ENCODE measurements at regions of chr6 and their contacts with region 1.

Region 1: GRCh38 chr6:137866914-137867684 is at the start of gene TNFAIP3:
- DNase-seq: peak; percentile 88 to 99 (median 93)
- ATAC-seq: peak; percentile 69
- H3K4me3 ChIP-seq: peak within 1 kb of the TSS; percentile 90
- H3K4me3 Mint-ChIP-seq: peak within 1 kb of the TSS; percentile 96
- H3K27ac ChIP-seq: peak within 1 kb of the TSS; percentile 96 to 98
- H3K27ac Mint-ChIP-seq: peak within 1 kb of the TSS; percentile 95
- H3K4me1 ChIP-seq: peaks cover 30% of the 10 kb centered on the region
- H3K4me1 Mint-ChIP-seq: peaks cover 64% of the 10 kb centered on the region
- H3K27me3 ChIP-seq: no peaks in the 10 kb centered on the region
- H3K27me3 Mint-ChIP-seq: peaks cover 4% of the 10 kb centered on the region
- CTCF ChIP-seq: peak; percentile 45
- total RNA-seq, gene TNFAIP3: 3,816 to 3,885 TPM

Region 2: GRCh38 chr6:137697267-137697938 is 169.7 kb before region 1 on chr6:
- CTCF ChIA-PET with region 1: interaction called, 4 read pairs
- POLR2A ChIA-PET with region 1: interaction called, 15 read pairs
- intact Hi-C with region 1: no loop called
- DNase-seq: no peak
- ATAC-seq: no peak
- H3K4me3 ChIP-seq: no peak overlapping the region
- H3K4me3 Mint-ChIP-seq: no peak overlapping the region
- H3K27ac ChIP-seq: no peak overlapping the region
- H3K27ac Mint-ChIP-seq: no peak overlapping the region
- H3K4me1 ChIP-seq: peaks cover 16% of the 10 kb centered on the region
- H3K4me1 Mint-ChIP-seq: peaks cover 19% of the 10 kb centered on the region
- H3K27me3 ChIP-seq: no peaks in the 10 kb centered on the region
- H3K27me3 Mint-ChIP-seq: peaks cover 5% of the 10 kb centered on the region
- CTCF ChIP-seq: no peak

Region 3: DNA sequence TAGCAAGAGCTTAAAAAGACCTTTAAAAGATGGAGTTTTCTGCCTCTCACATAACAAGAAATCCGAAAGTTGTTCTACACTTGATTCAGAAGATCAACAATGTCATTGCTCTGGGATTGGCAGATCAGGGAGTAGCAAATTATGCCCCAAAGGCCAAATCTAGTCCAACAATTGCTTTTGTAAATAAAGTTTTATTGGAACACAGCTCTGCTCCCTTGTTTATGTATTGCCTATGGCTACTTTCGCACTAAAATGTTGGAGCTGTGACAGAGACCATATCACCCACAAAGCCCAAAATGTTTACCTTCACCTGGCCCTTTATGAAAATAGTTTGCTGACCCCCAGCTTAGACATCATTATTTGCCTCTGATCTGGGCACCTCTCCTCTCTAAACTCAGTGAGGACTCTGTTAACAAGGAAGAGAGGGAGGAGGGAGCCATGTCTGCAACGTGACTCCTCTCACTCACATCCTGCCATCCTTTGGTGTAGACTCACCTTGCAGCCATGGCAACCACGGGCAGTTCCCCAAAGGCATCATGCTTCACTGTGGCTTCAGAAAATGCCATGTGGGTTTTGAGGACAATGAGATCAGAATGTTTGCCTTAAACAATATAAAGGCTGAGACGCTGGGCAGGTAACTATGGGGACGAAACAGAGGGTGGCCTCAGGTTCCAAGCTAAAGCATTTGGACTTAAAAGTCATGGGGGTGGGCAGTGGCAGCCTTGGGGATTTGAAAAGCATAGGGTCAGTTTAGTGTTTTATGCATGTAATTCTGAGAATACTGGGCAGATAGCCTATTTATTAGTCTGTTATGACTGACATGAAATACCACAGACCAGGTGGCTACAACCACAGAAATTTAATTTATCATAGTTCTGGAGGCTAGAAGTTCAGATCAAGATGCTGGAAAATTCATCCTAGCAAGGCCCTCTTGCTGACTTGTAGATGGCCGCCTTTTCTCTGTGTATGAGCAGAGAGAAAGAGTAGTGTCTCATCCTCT is 149.7 kb before region 1 on chr6:
- CTCF ChIA-PET with region 1: interaction called, 54 read pairs
- POLR2A ChIA-PET with region 1: interaction called, 52 read pairs
- intact Hi-C with region 1: loop called in 1 of 2 experiments (anchors 1 kb)
- DNase-seq: peak; percentile 48 to 96 (median 70)
- ATAC-seq: peak; percentile 52
- H3K4me3 ChIP-seq: no peak overlapping the region
- H3K4me3 Mint-ChIP-seq: peak overlapping the region; percentile 71
- H3K27ac ChIP-seq: peak overlapping the region; percentile 59 to 72
- H3K27ac Mint-ChIP-seq: peak overlapping the region; percentile 91
- H3K4me1 ChIP-seq: peaks cover 23% of the 10 kb centered on the region
- H3K4me1 Mint-ChIP-seq: peaks cover 46% of the 10 kb centered on the region
- H3K27me3 ChIP-seq: no peaks in the 10 kb centered on the region
- H3K27me3 Mint-ChIP-seq: no peaks in the 10 kb centered on the region
- CTCF ChIP-seq: no peak

Region 4: DNA sequence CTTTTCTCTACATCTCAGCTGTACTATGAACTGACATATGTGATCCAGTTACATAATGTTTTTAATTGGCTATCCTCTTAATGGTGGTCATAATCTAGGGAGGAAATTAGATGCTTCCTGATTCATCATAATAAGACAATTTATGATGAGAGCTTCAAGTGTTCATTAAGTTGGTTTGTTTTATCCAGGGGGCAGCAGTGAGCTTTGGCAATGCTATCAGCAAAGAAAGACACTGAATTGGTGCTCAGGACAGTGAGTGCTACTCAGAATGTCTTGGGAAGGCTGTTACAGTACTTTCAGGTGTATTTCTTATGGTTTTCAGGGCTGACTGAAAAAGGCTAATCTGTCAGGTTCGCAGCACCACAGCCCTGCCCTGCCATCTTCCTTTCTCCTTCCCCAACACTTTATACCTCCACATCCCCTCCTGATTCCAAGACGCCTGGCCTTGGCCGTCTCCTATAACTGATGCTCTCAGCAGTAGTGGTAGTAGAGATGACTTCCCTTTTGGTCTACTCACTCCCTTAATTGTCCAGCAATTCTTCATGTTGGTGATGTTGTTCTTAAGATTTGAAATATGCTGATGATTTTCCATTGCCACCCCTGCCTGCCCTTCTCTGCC is 67.0 kb before region 1 on chr6:
- CTCF ChIA-PET with region 1: interaction called, 52 read pairs
- POLR2A ChIA-PET with region 1: interaction called, 141 read pairs
- intact Hi-C with region 1: loop called (anchors 1 kb)
- DNase-seq: peak in 13 of 14 experiments; percentile 22 to 92 (median 57)
- ATAC-seq: peak; percentile 82
- H3K4me3 ChIP-seq: no peak overlapping the region
- H3K4me3 Mint-ChIP-seq: peak overlapping the region; percentile 14
- H3K27ac ChIP-seq: no peak overlapping the region
- H3K27ac Mint-ChIP-seq: peak overlapping the region; percentile 78
- H3K4me1 ChIP-seq: peaks cover 24% of the 10 kb centered on the region
- H3K4me1 Mint-ChIP-seq: peaks cover 76% of the 10 kb centered on the region
- H3K27me3 ChIP-seq: no peaks in the 10 kb centered on the region
- H3K27me3 Mint-ChIP-seq: no peaks in the 10 kb centered on the region
- CTCF ChIP-seq: peak; percentile 79

Region 5: DNA sequence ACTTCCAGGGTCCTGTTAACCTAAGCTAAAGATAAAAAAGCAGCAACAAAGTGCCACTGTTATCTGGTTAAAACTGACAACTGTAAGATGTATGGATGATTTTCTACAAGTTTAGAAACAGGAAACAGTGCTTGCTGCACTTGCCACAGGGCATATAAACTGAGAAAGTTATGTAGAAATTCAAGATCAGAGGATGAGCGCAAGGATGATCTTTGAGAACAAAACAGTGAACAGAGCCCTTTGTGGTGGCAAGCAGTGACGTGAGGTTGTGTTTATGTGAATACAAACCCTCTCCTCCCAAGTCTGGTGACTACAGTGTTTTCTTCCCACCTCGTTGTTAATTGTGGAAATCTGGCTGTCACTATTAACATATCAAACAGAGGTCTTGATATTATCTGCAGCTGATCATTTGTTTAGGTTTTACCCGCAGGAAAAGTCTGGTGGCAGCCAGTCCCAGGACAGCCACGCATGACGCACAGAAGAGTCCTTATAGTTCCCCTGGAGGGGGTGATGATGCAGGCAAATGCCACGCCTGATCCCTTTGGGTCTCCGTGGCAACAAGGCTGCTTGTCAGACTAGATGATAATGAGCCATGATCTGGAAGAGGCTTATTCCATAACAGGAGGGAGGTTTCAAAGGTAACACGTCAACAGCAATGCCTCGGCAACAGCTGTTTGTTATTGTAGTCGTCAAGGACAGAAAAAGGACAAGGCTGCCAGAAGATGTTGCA is 43.1 kb before region 1 on chr6:
- CTCF ChIA-PET with region 1: interaction called, 48 read pairs
- POLR2A ChIA-PET with region 1: interaction called, 131 read pairs
- intact Hi-C with region 1: loop called (anchors 1 to 2 kb)
- DNase-seq: peak; percentile 43 to 98 (median 76)
- ATAC-seq: peak; percentile 71
- H3K4me3 ChIP-seq: peak overlapping the region; percentile 21
- H3K4me3 Mint-ChIP-seq: peak overlapping the region; percentile 69
- H3K27ac ChIP-seq: peak overlapping the region; percentile 93 to 94
- H3K27ac Mint-ChIP-seq: peak overlapping the region; percentile 96
- H3K4me1 ChIP-seq: peaks cover 53% of the 10 kb centered on the region
- H3K4me1 Mint-ChIP-seq: peaks cover 70% of the 10 kb centered on the region
- H3K27me3 ChIP-seq: no peaks in the 10 kb centered on the region
- H3K27me3 Mint-ChIP-seq: no peaks in the 10 kb centered on the region
- CTCF ChIP-seq: no peak

Region 6: GRCh38 chr6:137927777-137928218 is 60.7 kb after region 1 on chr6:
- CTCF ChIA-PET with region 1: no interaction called
- POLR2A ChIA-PET with region 1: interaction called, 18 read pairs
- intact Hi-C with region 1: no loop called
- DNase-seq: peak; percentile 32 to 93 (median 53)
- ATAC-seq: peak; percentile 99
- H3K4me3 ChIP-seq: no peak overlapping the region
- H3K4me3 Mint-ChIP-seq: peak overlapping the region; percentile 9
- H3K27ac ChIP-seq: peak overlapping the region in 1 of 2 donors; percentile 18
- H3K27ac Mint-ChIP-seq: peak overlapping the region; percentile 70
- H3K4me1 ChIP-seq: peaks cover 26% of the 10 kb centered on the region
- H3K4me1 Mint-ChIP-seq: peaks cover 45% of the 10 kb centered on the region
- H3K27me3 ChIP-seq: no peaks in the 10 kb centered on the region
- H3K27me3 Mint-ChIP-seq: no peaks in the 10 kb centered on the region
- CTCF ChIP-seq: no peak

Region 7: GRCh38 chr6:137975188-137975940 is 108.3 kb after region 1 on chr6:
- CTCF ChIA-PET with region 1: interaction called, 11 read pairs
- POLR2A ChIA-PET with region 1: interaction called, 34 read pairs
- intact Hi-C with region 1: no loop called
- DNase-seq: peak in 5 of 14 experiments; percentile 17 to 85 (median 72)
- ATAC-seq: peak; percentile 81
- H3K4me3 ChIP-seq: peak overlapping the region; percentile 19
- H3K4me3 Mint-ChIP-seq: peak overlapping the region; percentile 82
- H3K27ac ChIP-seq: peak overlapping the region; percentile 64 to 72
- H3K27ac Mint-ChIP-seq: peak overlapping the region; percentile 84
- H3K4me1 ChIP-seq: peaks cover 37% of the 10 kb centered on the region
- H3K4me1 Mint-ChIP-seq: peaks cover 29% of the 10 kb centered on the region
- H3K27me3 ChIP-seq: no peaks in the 10 kb centered on the region
- H3K27me3 Mint-ChIP-seq: no peaks in the 10 kb centered on the region
- CTCF ChIP-seq: peak; percentile 60

Region 8: DNA sequence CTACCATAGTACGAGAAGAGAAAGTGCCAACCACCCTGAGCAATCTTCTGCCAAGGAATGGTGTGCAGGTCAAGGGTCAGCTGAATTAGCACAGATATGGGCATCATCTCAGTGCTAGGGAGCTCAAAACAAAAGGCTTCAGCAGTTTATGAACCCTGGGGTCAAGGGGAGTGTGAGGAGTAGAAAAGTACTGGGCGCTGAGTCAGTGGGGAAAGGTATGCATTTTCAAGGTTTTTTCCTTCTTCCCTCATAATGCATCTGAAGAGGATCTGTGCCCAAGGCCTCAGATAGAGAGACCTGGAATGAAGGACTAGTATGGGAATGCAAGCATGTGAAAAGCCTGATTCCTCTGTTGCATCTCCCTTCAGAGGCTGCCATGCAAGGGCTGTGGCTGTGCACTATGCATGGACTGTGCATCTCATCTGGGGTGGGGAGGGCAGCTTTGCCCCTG is 158.5 kb after region 1 on chr6:
- CTCF ChIA-PET with region 1: no interaction called
- POLR2A ChIA-PET with region 1: no interaction called
- intact Hi-C with region 1: no loop called
- DNase-seq: no peak
- ATAC-seq: no peak
- H3K4me3 ChIP-seq: no peak overlapping the region
- H3K4me3 Mint-ChIP-seq: no peak overlapping the region
- H3K27ac ChIP-seq: no peak overlapping the region
- H3K27ac Mint-ChIP-seq: no peak overlapping the region
- H3K4me1 ChIP-seq: no peaks in the 10 kb centered on the region
- H3K4me1 Mint-ChIP-seq: no peaks in the 10 kb centered on the region
- H3K27me3 ChIP-seq: no peaks in the 10 kb centered on the region
- H3K27me3 Mint-ChIP-seq: peaks cover 9% of the 10 kb centered on the region
- CTCF ChIP-seq: no peak